ENCODE measurements at regions of chr6 and their contacts with region 1.

Region 1: GRCh38 chr6:39980839-39981580 is 46.7 kb upstream of the MOCS1 start:
- DNase-seq: peak; percentile 3
- H3K4me3 Mint-ChIP-seq: no peak overlapping the region
- H3K27ac Mint-ChIP-seq: no peak overlapping the region
- H3K4me1 Mint-ChIP-seq: no peaks in the 10 kb centered on the region
- H3K27me3 Mint-ChIP-seq: peaks cover 6% of the 10 kb centered on the region

Region 2: DNA sequence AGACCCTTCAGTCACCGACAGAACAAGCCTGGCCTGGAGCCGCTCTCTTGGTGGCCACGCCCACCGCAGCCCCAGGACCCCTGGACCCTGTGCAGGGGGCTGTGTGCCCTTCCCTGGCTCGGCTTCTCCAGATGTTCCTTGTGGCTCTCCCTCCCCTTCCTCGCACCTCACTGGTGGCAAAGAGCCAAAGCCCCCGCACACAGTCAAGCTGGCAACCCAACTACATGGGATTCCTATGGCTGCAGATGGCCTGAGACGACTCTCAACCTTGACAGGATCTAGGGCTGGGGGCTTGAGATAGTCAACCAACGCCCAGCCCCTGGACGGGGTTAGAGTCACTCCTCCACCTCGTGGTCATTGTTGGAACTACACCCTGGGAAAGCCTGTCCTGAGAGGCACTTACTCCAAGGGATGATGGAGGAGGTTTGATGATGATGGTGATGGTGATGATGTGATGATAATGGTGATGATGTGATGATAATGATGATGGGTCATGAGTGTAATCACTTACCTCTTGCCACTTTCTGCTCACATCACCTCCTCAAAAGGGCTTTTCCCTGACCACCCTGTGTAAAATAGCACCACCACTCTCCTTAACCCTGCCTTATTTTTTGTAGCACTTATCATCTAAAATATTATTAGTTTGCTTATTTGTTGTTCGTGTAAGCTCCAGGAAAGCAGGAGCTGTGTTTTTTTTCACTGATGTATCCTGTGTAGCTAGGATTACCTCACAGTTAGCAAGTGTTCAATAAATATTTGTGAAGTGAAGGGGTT is 327.7 kb after region 1 on chr6:
- intact Hi-C with region 1: loop called (anchors 5 kb)
- DNase-seq: peak; percentile 42
- H3K4me3 Mint-ChIP-seq: no peak overlapping the region
- H3K27ac Mint-ChIP-seq: no peak overlapping the region
- H3K4me1 Mint-ChIP-seq: peaks cover 6% of the 10 kb centered on the region
- H3K27me3 Mint-ChIP-seq: peaks cover 32% of the 10 kb centered on the region

Region 3: GRCh38 chr6:40845553-40845952 is 864.5 kb after region 1 on chr6:
- intact Hi-C with region 1: loop called (anchors 10 kb)
- DNase-seq: peak; percentile 10
- H3K4me3 Mint-ChIP-seq: no peak overlapping the region
- H3K27ac Mint-ChIP-seq: no peak overlapping the region
- H3K4me1 Mint-ChIP-seq: no peaks in the 10 kb centered on the region
- H3K27me3 Mint-ChIP-seq: peaks cover 30% of the 10 kb centered on the region

Measured in activated T-helper 1 cell treated with anti-CD3 and anti-CD28 coated beads, Interleukin-12 subunit alpha, Interleukin-12 subunit beta, Interleukin-2, Interleukin-4 antibody, amounts not matched to agents 30 ng/mL and 10 ng/mL and 1 ng/mL, durations not matched to agents 14 hours and 24 hours and 36 hours (primary cell).